K562 (cell line): ENCODE measurements at regions of chr13 and their contacts with region 1.

Region 1: DNA sequence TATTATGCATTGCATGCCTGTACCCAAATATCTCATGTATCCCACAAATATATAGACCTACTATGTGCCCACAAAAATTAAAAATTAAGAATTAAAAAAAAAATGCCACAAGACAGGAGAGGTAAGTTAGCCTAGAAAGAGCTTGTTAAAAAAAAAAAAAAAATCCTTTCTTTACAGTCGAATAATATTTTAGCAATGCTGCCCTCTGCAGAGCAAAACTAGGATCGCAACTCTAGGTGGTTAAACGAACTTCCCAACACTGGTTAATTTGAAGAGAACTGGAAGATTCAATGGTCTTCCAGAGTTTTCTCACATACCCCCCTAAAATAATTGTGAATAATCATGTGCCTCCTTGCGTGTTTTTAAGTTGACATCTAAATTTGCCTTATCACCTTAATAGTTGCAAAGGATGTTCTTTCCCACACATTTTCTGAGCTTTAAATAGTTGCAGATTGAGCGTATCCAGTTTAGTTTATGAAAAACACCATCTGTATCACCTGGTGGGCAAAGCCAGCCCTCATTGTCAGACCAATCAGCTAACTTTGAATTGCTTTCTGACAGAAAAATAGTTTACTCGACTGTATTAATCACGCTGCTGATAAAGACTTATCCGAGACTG is 47.4 kb upstream of the RCBTB2 start:
- DNase-seq: peak; percentile 29 to 59 (median 36)
- ATAC-seq: peak; percentile 73
- H3K4me3 ChIP-seq: no peak overlapping the region
- H3K27ac ChIP-seq: no peak overlapping the region
- H3K4me1 ChIP-seq: no peaks in the 10 kb centered on the region
- H3K27me3 ChIP-seq: 0 out of 5 replicates have a peak, but pooled peaks cover 0 to 3% of the 10 kb centered on the region in 2 experiments
- CTCF ChIP-seq: peak; percentile 43 to 73 (median 58); a peak in 5 of 6 replicates
- EP300 ChIP-seq: no peak
- POLR2A ChIP-seq: no peak
- RAD21 ChIP-seq: peak; percentile 77 to 80

Region 2: DNA sequence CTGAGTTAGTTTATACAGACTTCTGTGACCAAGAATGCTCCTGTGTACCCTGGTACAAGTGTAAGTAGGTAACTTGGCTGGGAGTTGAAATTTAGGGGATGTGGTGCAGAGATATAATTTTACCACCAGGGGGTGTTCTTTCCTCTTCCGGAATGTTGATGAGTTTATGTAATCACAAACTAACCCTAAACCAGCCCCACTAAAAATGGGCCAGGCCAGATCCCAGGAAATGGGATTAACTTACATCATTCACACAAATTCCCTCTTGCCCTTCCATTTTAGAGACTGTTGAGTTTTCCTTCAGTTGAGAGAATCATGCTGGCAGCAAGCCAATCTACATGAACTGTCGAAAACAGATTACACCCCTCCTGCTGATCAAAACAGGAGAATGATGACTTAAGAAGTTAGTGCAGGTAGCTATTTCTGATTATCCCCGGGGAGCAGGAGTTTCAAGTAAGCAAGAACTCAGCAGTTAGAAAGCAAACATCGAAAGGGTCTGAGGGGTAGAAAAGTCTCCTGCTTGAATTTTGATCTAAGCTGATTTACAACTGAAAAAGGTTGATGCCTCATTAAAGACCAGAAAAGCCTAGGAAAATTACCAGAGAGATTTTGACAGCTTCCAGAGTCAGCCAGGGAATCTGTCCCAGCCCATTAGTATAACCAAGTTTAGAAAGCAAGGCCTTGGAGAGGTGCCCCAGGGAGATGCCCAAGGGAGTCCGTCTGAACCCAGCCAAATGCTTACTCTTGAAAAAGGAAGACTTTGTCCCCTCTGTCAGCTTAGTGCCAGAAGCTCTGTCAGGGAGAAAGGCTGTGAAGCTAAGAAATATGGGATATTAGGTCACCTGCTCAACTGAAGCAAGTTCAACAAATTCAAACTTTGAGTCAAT is 453.1 kb before region 1 on chr13:
- CTCF ChIA-PET with region 1: interaction called, 8 read pairs
- POLR2A ChIA-PET with region 1: no interaction called
- in situ Hi-C with region 1: loop called (anchors 10 kb)
- intact Hi-C with region 1: loop called (anchors 5 kb)
- DNase-seq: peak; percentile 50 to 61 (median 54)
- ATAC-seq: peak; percentile 90
- H3K4me3 ChIP-seq: no peak overlapping the region
- H3K27ac ChIP-seq: no peak overlapping the region
- H3K4me1 ChIP-seq: peaks cover 0 to 4% of the 10 kb centered on the region in 2 experiments; a peak in 1 of 5 replicates
- H3K27me3 ChIP-seq: no peaks in the 10 kb centered on the region
- CTCF ChIP-seq: peak; percentile 45 to 74 (median 60)
- EP300 ChIP-seq: no peak
- POLR2A ChIP-seq: no peak
- RAD21 ChIP-seq: peak; percentile 85 to 89

Region 3: DNA sequence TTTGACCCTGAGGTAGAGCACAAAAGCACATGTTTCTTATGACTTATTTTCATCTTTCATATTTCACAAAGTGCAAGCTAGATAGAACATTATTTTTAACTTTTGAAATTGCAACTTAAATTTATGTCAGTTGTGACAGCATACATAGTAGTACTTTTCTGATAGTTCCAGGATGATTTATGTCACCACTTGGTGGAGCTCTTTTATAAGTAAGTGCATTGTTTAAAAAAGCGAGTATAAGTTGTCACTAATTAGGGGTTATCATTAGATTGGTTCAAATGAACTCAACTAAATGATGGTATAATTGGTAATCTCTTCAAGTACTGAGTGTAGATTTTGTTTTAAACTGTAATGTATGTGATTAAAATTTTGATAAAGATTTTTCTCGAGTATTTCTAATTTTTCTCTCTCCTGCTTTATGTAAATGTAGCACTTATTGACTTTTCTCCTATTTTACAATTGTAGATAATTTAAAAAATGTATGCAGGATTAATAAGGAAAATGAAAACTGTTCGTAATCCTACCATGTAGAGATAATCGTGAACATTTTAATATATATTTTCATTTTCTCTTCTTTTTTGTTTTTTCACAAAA is 245.7 kb before region 1 on chr13:
- CTCF ChIA-PET with region 1: no interaction called
- POLR2A ChIA-PET with region 1: no interaction called
- in situ Hi-C with region 1: loop called (anchors 25 kb)
- intact Hi-C with region 1: loop called (anchors 1 kb)
- DNase-seq: peak in 2 of 4 experiments; percentile 7 to 21
- ATAC-seq: peak; percentile 55; the same call in 1 of the 3 replicates
- H3K4me3 ChIP-seq: no peak overlapping the region
- H3K27ac ChIP-seq: no peak overlapping the region
- H3K4me1 ChIP-seq: no peaks in the 10 kb centered on the region
- H3K27me3 ChIP-seq: no peaks in the 10 kb centered on the region
- CTCF ChIP-seq: peak in 2 of 3 experiments; percentile 40 to 49; a peak in 3 of 6 replicates
- EP300 ChIP-seq: no peak
- POLR2A ChIP-seq: no peak
- RAD21 ChIP-seq: peak in 1 of 2 experiments; percentile 66; a peak in 2 of 4 replicates

Region 4: DNA sequence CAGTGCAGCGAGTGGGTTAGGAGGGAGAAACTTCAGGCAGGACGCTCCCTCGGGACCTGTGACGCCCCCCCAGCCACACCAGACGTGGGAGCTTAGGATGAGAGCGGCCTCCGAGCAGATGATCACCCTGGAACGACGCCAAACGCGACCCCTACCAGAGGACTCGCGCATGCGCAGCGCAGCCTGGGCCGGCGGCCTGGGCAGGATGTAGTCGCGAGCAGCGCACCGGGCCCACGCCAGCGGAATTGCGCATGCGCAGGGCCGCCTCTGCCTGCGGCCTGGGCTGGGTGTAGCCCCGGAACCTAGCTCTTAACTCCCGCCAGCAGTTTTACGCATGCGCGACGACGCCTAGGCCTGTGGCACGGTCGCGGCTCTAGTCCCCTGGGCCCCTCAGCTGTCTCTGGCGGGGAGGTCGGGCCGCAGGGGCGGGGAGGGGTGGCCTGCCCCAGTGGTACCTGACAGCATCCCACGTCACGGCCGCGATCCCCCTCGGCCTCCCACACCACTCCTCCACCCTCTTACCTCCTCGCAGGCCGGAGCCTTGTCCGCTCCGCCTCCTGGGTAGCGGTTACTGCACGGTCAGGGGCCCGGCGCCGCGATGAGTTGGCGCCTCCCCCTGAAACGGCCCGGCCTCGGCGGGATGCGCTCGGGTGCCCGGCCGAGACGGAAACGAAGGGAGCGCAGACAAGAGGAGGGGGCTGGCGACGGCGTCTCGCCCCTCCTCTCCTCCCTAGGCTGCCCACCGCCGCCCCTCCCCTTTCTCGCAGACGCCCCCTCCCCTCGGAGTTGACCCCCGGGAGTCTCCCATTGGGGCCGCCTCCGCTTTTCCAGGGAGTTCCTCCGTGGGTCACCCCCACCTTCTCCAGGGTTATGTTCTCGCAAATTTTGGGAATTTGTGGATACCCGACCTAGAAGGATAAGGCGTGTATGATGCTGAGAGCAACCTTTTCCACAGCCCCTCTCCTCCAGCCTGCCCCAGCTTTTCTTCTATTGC is 47.5 kb before region 1 on chr13 and contains the start of gene RCBTB2:
- CTCF ChIA-PET with region 1: no interaction called
- POLR2A ChIA-PET with region 1: no interaction called
- in situ Hi-C with region 1: no loop called
- intact Hi-C with region 1: loop called (anchors 5 kb)
- DNase-seq: peak; percentile 87 to 90 (median 89)
- ATAC-seq: peak; percentile 91
- H3K4me3 ChIP-seq: peak within 1 kb of the TSS; percentile 36
- H3K27ac ChIP-seq: peak within 1 kb of the TSS; percentile 64
- H3K4me1 ChIP-seq: peaks cover 5 to 7% of the 10 kb centered on the region in 2 experiments; a peak in 4 of 5 replicates
- H3K27me3 ChIP-seq: no peaks in the 10 kb centered on the region
- CTCF ChIP-seq: no peak
- EP300 ChIP-seq: no peak
- POLR2A ChIP-seq: peak; percentile 74
- RAD21 ChIP-seq: no peak
- polyA plus RNA-seq, gene RCBTB2: 2.8 to 3.3 TPM

Region 5: DNA sequence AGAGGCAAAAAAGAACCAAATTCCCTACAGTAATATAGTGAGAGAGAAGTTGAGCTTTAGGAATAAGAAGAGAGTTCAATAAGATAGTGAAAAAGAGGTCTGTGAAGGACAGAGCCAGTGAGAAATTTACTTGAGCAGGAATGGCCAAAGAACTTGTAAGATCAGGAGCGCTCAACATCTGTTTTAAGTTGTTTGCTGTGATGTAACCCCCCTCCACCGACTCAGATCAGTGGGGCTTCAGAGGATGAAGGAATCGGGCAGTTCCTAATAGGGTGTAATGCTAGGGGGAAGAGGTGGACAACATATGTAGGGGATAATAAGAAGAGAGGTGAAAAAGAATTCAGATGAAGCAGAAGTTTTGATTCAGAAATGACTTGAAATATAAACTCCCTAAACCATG is 310.1 kb after region 1 on chr13:
- CTCF ChIA-PET with region 1: no interaction called
- POLR2A ChIA-PET with region 1: no interaction called
- in situ Hi-C with region 1: no loop called
- intact Hi-C with region 1: no loop called
- DNase-seq: no peak
- ATAC-seq: no peak
- H3K4me3 ChIP-seq: no peak overlapping the region
- H3K27ac ChIP-seq: no peak overlapping the region
- H3K4me1 ChIP-seq: no peaks in the 10 kb centered on the region
- H3K27me3 ChIP-seq: no peaks in the 10 kb centered on the region; a peak in 2 of 5 replicates
- CTCF ChIP-seq: no peak
- EP300 ChIP-seq: no peak
- POLR2A ChIP-seq: no peak
- RAD21 ChIP-seq: no peak

Region 6: DNA sequence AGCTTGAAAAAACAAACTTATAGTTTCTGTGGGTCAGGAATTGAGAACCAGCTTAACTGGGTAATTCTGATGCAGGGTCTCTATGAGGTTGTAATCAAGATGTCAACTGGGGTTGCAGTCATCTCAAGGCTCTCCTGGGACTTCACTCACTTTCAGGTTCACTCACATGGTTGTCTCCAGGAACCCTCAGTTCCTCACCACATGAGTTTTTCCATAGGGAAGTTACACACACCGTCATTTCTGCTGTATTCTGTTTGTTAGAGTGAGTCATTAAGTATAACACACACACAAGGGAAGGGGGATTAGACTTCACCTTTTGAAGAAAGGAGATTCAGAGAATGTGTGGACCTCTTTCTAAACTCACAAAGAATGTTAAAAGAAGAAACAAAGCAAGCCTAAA is 605.0 kb after region 1 on chr13:
- CTCF ChIA-PET with region 1: no interaction called
- POLR2A ChIA-PET with region 1: no interaction called
- in situ Hi-C with region 1: no loop called
- intact Hi-C with region 1: no loop called
- DNase-seq: no peak
- ATAC-seq: no peak
- H3K4me3 ChIP-seq: no peak overlapping the region
- H3K27ac ChIP-seq: no peak overlapping the region
- H3K4me1 ChIP-seq: no peaks in the 10 kb centered on the region
- H3K27me3 ChIP-seq: no peaks in the 10 kb centered on the region
- CTCF ChIP-seq: no peak
- EP300 ChIP-seq: no peak
- POLR2A ChIP-seq: no peak
- RAD21 ChIP-seq: no peak